ENCODE measurements at regions of chr7 and their contacts with region 1.

Region 1: DNA sequence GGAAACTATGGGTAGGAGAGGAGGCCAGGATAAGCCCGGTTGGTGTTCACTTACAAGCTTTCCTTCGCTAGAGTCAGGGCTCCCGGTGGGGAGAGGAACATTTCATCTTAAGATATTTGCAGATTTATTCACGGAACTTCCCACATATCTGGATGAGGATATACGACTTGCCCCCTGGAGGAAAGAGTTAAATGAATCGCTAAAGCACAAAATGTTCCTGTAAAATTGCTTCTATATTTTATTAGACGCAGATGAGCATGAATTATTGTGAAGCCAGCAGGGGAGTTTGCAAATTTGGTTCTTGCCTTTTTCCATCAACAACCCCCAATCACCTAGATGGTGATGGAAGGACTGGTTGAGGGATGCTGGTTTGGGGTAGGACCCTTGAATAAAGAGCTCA is 47.9 kb upstream of the BAIAP2L1 start:
- DNase-seq: no peak
- H3K4me3 ChIP-seq: no peak overlapping the region
- H3K27ac ChIP-seq: no peak overlapping the region
- H3K4me1 ChIP-seq: no peaks in the 10 kb centered on the region
- H3K27me3 ChIP-seq: no peaks in the 10 kb centered on the region
- CTCF ChIP-seq: no peak

Region 2: GRCh38 chr7:98687078-98687800 is 238.5 kb after region 1 on chr7:
- intact Hi-C with region 1: loop called (anchors 5 kb)
- DNase-seq: peak in 1 of 5 donors; percentile 14
- H3K4me3 ChIP-seq: no peak overlapping the region
- H3K27ac ChIP-seq: no peak overlapping the region
- H3K4me1 ChIP-seq: no peaks in the 10 kb centered on the region
- H3K27me3 ChIP-seq: no peaks in the 10 kb centered on the region
- CTCF ChIP-seq: no peak